HEK293 (cell line): ENCODE measurements at regions of chr2 and their contacts with region 1.

Region 1: DNA sequence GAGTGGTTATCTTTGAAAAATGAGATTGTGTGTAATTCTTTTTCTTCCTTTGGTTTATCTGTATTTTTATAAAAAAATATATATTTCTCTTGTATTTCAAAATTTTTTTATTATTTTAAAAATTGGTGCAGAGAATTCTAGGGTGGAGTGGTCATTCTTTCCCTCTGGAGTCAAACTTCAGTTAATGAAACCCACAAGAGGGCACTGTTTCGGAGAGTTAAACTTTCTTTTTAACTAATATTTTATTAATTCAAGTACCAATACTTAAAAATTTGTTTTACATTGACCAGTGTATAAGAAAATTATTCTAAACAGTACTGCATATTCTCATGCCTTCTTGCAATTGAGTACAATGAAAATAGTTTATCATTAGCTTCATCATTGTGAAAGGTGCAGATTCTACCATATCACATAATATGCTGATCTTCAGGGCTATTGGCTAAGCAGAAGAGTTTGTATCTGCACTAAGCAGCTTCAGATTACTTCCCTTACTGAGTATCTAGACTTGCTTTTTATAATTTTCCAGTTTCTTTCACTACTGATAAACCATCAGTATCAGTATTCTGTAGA is 50.1 kb downstream of the HS1BP3 start:
- H3K4me3 ChIP-seq: no peak overlapping the region
- H3K27ac ChIP-seq: no peak overlapping the region
- H3K4me1 ChIP-seq: no peaks in the 10 kb centered on the region
- CTCF ChIP-seq: no peak

Region 2: GRCh38 chr2:20207051-20207450 is 393.8 kb before region 1 on chr2:
- CTCF ChIA-PET with region 1: no interaction called
- POLR2A ChIA-PET with region 1: no interaction called
- H3K4me3 ChIP-seq: no peak overlapping the region
- H3K27ac ChIP-seq: no peak overlapping the region
- H3K4me1 ChIP-seq: peaks cover 3% of the 10 kb centered on the region; the same call in 1 of the 2 replicates
- CTCF ChIP-seq: no peak

Region 3: GRCh38 chr2:20617892-20618467 is 17.1 kb after region 1 on chr2:
- CTCF ChIA-PET with region 1: interaction called, 10 read pairs
- POLR2A ChIA-PET with region 1: no interaction called
- H3K4me3 ChIP-seq: no peak overlapping the region
- H3K27ac ChIP-seq: no peak overlapping the region; the same call in 1 of the 2 replicates
- H3K4me1 ChIP-seq: peaks cover 7% of the 10 kb centered on the region; the same call in 1 of the 2 replicates
- CTCF ChIP-seq: 0 out of 2 replicates have a peak, but pooled peaks have one; percentile 27

Region 4: GRCh38 chr2:20667151-20667530 is 66.3 kb after region 1 on chr2:
- CTCF ChIA-PET with region 1: no interaction called
- POLR2A ChIA-PET with region 1: no interaction called
- H3K4me3 ChIP-seq: peak overlapping the region; percentile 49
- H3K27ac ChIP-seq: peak overlapping the region; percentile 37; the same call in 1 of the 2 replicates
- H3K4me1 ChIP-seq: no peaks in the 10 kb centered on the region
- CTCF ChIP-seq: no peak

Region 5: DNA sequence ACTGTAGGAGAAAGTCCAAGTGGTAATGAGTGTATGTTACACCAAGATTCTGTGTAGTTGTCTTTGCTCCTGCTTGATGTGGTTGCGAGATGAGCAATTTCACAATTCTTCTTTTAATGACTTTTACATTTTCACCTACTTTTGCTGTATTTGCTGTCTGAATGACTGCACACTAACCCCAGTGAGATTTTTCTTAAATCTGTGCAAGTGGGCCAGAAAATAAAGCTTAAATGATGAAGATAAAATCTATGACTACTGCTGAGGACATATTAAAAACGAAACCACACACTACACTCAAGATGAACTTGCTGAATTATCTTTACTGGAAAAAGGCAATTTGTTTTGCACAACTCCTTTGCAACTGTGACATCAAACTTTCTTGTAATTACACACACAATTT is 218.0 kb after region 1 on chr2:
- CTCF ChIA-PET with region 1: no interaction called
- POLR2A ChIA-PET with region 1: no interaction called
- H3K4me3 ChIP-seq: no peak overlapping the region
- H3K27ac ChIP-seq: no peak overlapping the region
- H3K4me1 ChIP-seq: no peaks in the 10 kb centered on the region
- CTCF ChIP-seq: no peak

Region 6: GRCh38 chr2:21301871-21302455 is 701.1 kb after region 1 on chr2:
- CTCF ChIA-PET with region 1: no interaction called
- POLR2A ChIA-PET with region 1: no interaction called
- H3K4me3 ChIP-seq: no peak overlapping the region
- H3K27ac ChIP-seq: no peak overlapping the region
- H3K4me1 ChIP-seq: no peaks in the 10 kb centered on the region
- CTCF ChIP-seq: no peak